Ovary (tissue), 10 donors: ENCODE measurements at regions of chr12 and their contacts with region 1.

Region 1: GRCh38 chr12:56510786-56511185 is 10.8 kb upstream of the RBMS2 start:
- DNase-seq: no peak
- H3K4me3 ChIP-seq: no peak overlapping the region
- H3K27ac ChIP-seq: no peak overlapping the region
- H3K4me1 ChIP-seq: peaks cover 1% of the 10 kb centered on the region
- H3K27me3 ChIP-seq: no peaks in the 10 kb centered on the region
- CTCF ChIP-seq: no peak
- EP300 ChIP-seq: no peak
- POLR2A ChIP-seq: no peak

Region 2: DNA sequence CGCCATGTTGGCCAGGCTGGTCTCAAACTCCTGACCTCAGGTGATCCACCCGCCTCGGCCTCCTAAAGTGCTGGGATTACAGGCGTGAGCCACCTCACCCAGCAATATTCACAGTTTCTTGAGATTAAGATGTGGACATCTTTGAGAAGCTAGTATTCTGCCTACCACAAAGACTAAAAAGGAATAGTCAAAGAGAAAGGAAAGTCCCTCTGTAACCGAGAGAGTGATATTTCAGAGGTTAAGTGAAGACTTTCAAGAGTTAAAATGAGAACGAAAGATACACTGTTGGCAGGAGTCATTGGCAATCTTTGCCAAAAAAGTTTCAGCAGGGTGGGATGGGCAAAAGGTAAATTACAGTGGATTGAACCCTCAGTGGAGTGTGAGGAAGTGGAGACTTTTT is 564.2 kb before region 1 on chr12:
- intact Hi-C with region 1: no loop called
- DNase-seq: no peak
- H3K4me3 ChIP-seq: no peak overlapping the region
- H3K27ac ChIP-seq: no peak overlapping the region
- H3K4me1 ChIP-seq: no peaks in the 10 kb centered on the region
- H3K27me3 ChIP-seq: no peaks in the 10 kb centered on the region
- CTCF ChIP-seq: no peak
- EP300 ChIP-seq: no peak
- POLR2A ChIP-seq: no peak

Region 3: DNA sequence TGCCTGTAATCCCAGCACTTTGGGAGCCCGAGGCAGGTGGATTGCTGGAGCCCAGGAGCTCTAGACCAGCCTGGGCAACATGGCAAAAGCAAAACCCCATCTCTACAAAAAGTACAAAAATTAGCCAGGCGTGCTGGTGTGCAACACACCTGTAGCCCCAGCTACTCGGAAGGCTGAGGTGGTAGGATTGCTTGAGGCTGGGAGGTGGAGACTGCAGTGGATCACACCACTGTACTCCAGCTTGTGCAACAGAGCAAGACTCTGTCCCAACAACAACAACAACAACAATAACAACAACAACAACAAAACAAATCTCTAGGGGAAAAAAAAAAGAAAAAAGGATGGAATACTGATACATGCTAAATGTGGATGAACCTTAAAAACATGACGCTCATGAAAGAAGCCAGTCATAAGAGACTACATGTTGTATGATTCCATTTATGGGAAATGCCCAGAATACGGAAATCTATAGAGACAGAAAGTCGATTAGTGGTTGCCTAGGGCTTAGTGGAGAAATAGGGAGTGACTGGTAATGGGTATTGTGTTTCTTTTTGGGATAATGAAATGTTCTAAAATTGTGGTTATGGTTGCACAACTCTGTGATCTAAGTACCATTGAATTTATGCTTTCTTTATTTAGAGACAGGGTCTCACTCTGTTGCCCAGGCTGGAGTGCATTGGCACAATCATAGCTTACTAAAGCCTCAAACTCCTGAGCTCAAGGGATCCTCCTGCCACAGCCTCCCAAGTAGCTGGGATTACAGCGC is 18.7 kb after region 1 on chr12:
- intact Hi-C with region 1: no loop called
- DNase-seq: no peak
- H3K4me3 ChIP-seq: no peak overlapping the region
- H3K27ac ChIP-seq: no peak overlapping the region
- H3K4me1 ChIP-seq: peaks cover 6% of the 10 kb centered on the region
- H3K27me3 ChIP-seq: no peaks in the 10 kb centered on the region
- CTCF ChIP-seq: no peak
- EP300 ChIP-seq: no peak
- POLR2A ChIP-seq: no peak

Region 4: GRCh38 chr12:56571126-56571525 is 60.3 kb after region 1 on chr12:
- intact Hi-C with region 1: loop called in 3 of 4 experiments (anchors 5 kb)
- DNase-seq: no peak
- H3K4me3 ChIP-seq: no peak overlapping the region
- H3K27ac ChIP-seq: no peak overlapping the region
- H3K4me1 ChIP-seq: no peaks in the 10 kb centered on the region
- H3K27me3 ChIP-seq: no peaks in the 10 kb centered on the region
- CTCF ChIP-seq: no peak
- EP300 ChIP-seq: no peak
- POLR2A ChIP-seq: no peak

Region 5: GRCh38 chr12:56589783-56590182 is 79.0 kb after region 1 on chr12:
- intact Hi-C with region 1: loop called in 1 of 4 experiments (anchors 5 kb)
- DNase-seq: no peak
- H3K4me3 ChIP-seq: no peak overlapping the region
- H3K27ac ChIP-seq: no peak overlapping the region
- H3K4me1 ChIP-seq: no peaks in the 10 kb centered on the region
- H3K27me3 ChIP-seq: no peaks in the 10 kb centered on the region
- CTCF ChIP-seq: no peak
- EP300 ChIP-seq: no peak
- POLR2A ChIP-seq: no peak